Right ventricle myocardium inferior (tissue), 1 donor: ENCODE measurements at regions of chr14 and their contacts with region 1.

Region 1: DNA sequence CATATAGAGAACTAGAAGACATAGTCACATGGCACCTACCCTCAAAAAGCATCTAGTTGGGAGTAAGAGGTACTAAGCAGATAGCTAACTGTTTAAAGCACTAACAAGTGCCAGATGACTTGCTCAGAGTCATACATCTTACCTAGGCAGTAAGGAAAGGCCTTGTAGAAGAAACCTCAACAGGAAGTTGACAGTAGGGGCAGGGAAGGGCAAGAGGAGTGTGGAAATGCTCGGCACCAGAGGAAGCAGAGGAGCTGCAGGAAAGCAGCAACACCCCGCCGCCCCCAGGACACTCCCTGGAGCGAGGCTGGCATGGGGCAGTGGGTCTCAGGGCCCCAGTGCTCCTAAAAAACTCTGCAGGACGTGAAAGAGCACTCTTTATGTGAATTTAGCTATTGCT is 92.9 kb downstream of the PPP2R5C start:
- DNase-seq: peak; percentile 75
- ATAC-seq: no peak

Region 2: GRCh38 chr14:101809671-101810514 is 44.5 kb before region 1 on chr14:
- intact Hi-C with region 1: loop called (anchors 5 kb)
- DNase-seq: peak; percentile 91
- ATAC-seq: peak; percentile 94